ENCODE measurements at regions of chr12 and their contacts with region 1.

Region 1: GRCh38 chr12:51247523-51248206 is 9.0 kb downstream of the DAZAP2 start:
- DNase-seq: no peak
- ATAC-seq: no peak
- H3K4me3 ChIP-seq: no peak overlapping the region
- H3K27ac ChIP-seq: no peak overlapping the region
- H3K4me1 ChIP-seq: peaks cover 0 to 6% of the 10 kb centered on the region in 2 experiments; a peak in 1 of 4 replicates
- H3K27me3 ChIP-seq: no peaks in the 10 kb centered on the region
- CTCF ChIP-seq: no peak
- POLR2A ChIP-seq: no peak
- RAD21 ChIP-seq: no peak

Region 2: GRCh38 chr12:51047655-51048540 is 199.8 kb before region 1 on chr12 and contains the start of gene LETMD1:
- CTCF ChIA-PET with region 1: no interaction called
- POLR2A ChIA-PET with region 1: no interaction called
- RAD21 ChIA-PET with region 1: no interaction called
- intact Hi-C with region 1: loop called (anchors 1 kb)
- DNase-seq: peak; percentile 99
- ATAC-seq: peak; percentile 99
- H3K4me3 ChIP-seq: peak within 1 kb of the TSS; percentile 71 to 88
- H3K27ac ChIP-seq: peak within 1 kb of the TSS; percentile 84
- H3K4me1 ChIP-seq: peaks cover 7 to 18% of the 10 kb centered on the region in 2 experiments; a peak in 2 of 4 replicates
- H3K27me3 ChIP-seq: no peaks in the 10 kb centered on the region
- CTCF ChIP-seq: peak; percentile 84 to 88 (median 87)
- POLR2A ChIP-seq: peak; percentile 75
- RAD21 ChIP-seq: peak; percentile 89
- total RNA-seq, gene LETMD1: 70.8 TPM